PC-3 (cell line): ENCODE measurements at regions of chr16 and their contacts with region 1.

Region 1: GRCh38 chr16:3098459-3099394 is at the start of gene ZSCAN10:
- DNase-seq: no peak
- ATAC-seq: no peak
- H3K4me3 ChIP-seq: no peak within 1 kb of the TSS; the same call in 1 of the 2 replicates
- H3K27ac ChIP-seq: no peak within 1 kb of the TSS
- H3K4me1 ChIP-seq: 0 out of 2 replicates have a peak, but pooled peaks cover 4% of the 10 kb centered on the region
- H3K27me3 ChIP-seq: no peaks in the 10 kb centered on the region
- CTCF ChIP-seq: no peak
- total RNA-seq, gene ZSCAN10: not detected in 2 replicates

Region 2: DNA sequence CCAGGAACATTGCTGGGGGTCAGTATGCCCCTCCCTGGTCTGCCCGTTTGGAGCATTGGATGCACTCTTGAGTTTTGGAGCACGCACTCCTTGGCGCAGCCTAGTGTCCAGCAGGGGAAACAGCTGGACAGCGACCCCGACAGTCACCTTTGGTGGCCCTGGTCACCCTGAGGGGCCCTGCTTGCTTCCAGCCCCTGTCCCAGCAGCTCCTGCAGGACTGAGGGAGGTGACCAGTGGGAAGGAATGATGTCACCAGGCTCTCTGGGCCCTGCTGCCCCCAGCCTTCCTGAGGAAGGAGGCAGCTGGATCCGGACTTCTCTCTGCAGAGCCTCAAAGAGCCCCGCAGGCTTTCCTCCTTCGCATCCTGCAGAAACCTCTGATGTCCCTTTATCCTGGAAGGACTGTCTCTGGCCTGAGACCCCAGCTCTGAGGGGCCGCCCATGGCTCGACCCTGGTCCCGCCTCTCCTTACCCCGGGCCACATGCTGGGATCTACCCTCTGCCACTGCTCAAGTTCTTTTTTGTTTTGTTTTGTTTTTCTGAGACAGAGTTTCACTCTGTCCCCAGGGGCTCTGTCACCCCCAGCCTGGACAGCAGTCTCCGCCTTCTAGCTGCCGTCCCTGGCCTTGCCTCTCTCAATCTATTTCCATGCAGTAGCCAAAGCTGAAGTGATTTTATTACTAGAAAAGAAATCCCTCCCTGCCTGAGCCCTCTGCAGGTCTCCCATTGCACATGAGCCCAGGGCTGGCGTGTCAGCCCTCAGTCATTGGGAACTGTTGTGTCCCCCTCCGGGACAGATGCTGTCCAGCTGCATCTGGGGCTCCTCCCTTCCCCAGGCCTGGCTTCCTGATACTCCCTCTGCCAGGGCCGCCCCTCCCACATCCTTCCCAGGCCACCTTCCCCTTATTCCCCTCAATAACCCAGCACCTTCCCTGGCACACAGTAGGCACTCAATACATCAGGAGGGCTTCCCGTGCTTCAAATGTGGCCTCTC is 11.2 kb before region 1 on chr16:
- CTCF ChIA-PET with region 1: interaction called, 13 read pairs
- POLR2A ChIA-PET with region 1: no interaction called
- intact Hi-C with region 1: no loop called
- DNase-seq: no peak
- ATAC-seq: no peak
- H3K4me3 ChIP-seq: no peak overlapping the region
- H3K27ac ChIP-seq: no peak overlapping the region
- H3K4me1 ChIP-seq: no peaks in the 10 kb centered on the region
- H3K27me3 ChIP-seq: no peaks in the 10 kb centered on the region
- CTCF ChIP-seq: peak; percentile 39; the same call in 1 of the 2 replicates